Dorsolateral prefrontal cortex (tissue), 120 donors: ENCODE measurements at regions of chr2 and their contacts with region 1.

Region 1: DNA sequence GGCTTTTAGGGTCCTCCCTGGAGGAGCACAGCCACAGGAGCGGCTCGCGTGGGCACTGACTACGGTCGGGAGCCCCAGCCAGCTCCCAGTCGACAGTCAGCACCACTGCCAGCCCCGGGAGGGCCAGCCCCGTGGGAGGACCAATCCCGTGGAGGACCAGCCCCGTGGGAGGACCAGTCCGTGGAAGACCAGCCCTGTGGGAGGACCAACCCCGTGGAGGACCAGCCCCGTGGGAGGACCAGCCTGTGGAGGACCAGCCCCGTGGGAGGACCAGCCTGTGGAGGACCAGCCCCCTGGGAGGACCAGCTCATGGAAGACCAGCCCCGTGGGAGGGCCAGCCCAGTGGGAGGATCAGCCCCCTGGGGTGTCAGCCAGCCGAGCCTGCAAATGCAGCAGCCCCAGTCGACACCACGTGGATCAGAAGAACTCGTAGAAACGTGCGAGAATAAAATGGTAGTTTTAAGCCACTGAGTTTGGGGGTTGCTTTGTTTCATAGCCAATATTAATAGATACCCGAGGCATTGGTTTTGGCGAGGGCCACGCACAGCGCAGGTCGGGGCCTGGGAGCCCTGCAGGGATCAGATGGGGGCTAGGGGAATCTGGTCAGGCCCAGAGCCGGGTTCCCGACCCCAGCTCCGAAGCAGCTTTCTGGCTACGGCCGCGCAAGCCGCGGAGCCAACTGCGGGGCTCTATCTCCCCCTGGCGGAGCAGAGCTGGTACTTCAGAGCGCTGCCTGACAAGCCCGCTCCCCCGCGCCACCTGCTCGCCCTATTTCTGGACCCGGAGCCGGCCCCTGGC is 73.0 kb downstream of the TEX51 start:
- DNase-seq: peak; percentile 67 to 86 (median 78)
- H3K4me3 ChIP-seq: peak overlapping the region; percentile 32 to 72 (median 59)
- H3K27ac ChIP-seq: peak overlapping the region in 46 of 59 donors; percentile 5 to 85 (median 64)
- H3K27me3 ChIP-seq: no peaks in the 10 kb centered on the region
- CTCF ChIP-seq: peak; percentile 81 to 99 (median 96)

Region 2: GRCh38 chr2:126776692-126777619 is 194.7 kb before region 1 on chr2:
- intact Hi-C with region 1: loop called (anchors 5 to 10 kb)
- DNase-seq: peak; percentile 64 to 91 (median 82)
- H3K4me3 ChIP-seq: peak overlapping the region; percentile 49 to 84 (median 68)
- H3K27ac ChIP-seq: peak overlapping the region in 40 of 59 donors; percentile 3 to 81 (median 44)
- H3K27me3 ChIP-seq: peaks cover 0 to 4% (median 0%) of the 10 kb centered on the region in 45 donors
- CTCF ChIP-seq: peak; percentile 50 to 96 (median 90)

Region 3: GRCh38 chr2:126886211-126886915 is 85.3 kb before region 1 on chr2:
- intact Hi-C with region 1: loop called in 1 of 2 experiments (anchors 5 kb)
- DNase-seq: peak; percentile 26 to 77 (median 58)
- H3K4me3 ChIP-seq: peak overlapping the region in 58 of 59 donors; percentile 24 to 67 (median 50)
- H3K27ac ChIP-seq: no peak overlapping the region
- H3K27me3 ChIP-seq: peaks cover 0 to 6% (median 0%) of the 10 kb centered on the region in 45 donors
- CTCF ChIP-seq: peak in 55 of 56 donors; percentile 22 to 82 (median 66)

Region 4: GRCh38 chr2:126986631-126987187 is 15.0 kb after region 1 on chr2:
- intact Hi-C with region 1: no loop called
- DNase-seq: peak in 2 of 10 donors; percentile 45 to 55
- H3K4me3 ChIP-seq: no peak overlapping the region
- H3K27ac ChIP-seq: peak overlapping the region in 10 of 59 donors; percentile 6 to 62 (median 30)
- H3K27me3 ChIP-seq: no peaks in the 10 kb centered on the region
- CTCF ChIP-seq: no peak

Region 5: DNA sequence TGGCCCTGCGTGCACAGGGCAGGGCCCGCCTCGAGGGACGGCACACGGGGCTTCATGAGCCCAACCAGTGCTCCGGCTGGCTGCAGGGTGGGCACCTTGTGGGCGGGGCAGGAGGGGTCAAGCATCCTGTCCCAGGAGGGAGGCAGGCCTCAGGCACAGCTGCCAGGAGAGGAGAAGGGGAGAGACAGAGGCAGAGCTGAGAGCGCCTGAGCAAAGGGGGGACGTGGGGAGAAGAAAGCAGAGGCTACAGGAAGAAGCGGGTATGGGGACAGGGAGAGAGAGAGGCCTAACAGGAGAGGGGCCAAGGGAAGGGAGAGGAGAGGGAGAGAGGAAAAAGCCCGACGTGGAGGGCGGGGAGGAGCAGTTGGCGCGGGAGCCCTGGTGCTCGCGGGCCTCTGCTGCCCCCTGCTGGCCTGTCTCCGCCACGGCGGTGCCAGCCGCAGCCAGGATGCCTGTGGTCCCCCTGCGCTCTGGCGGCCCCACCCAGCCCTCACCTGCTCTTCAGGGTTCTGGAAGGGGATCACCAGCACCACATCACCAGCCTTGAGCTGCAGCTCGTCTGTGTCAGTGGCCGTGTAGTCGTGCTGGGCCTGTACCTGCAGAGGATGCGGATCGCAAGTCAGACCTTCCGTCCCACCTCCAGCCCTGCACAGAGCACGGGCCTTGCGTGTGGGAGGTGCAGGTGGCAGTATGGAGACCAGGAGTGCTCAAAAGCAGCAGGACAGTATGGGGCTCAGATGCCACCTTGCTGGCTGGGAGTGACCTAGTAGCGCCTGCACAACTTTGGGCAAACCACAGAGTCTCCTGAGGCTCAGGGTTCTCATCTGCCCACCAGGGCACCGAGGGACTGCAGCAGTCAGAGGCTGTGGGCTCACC is 78.5 kb after region 1 on chr2:
- intact Hi-C with region 1: loop called in 1 of 2 experiments (anchors 5 kb)
- DNase-seq: peak; percentile 63 to 85 (median 75)
- H3K4me3 ChIP-seq: no peak overlapping the region
- H3K27ac ChIP-seq: peak overlapping the region in 58 of 59 donors; percentile 18 to 98 (median 86)
- H3K27me3 ChIP-seq: no peaks in the 10 kb centered on the region
- CTCF ChIP-seq: peak; percentile 76 to 99 (median 96)

Region 6: GRCh38 chr2:127261804-127262406 is 290.2 kb after region 1 on chr2:
- intact Hi-C with region 1: no loop called
- DNase-seq: no peak
- H3K4me3 ChIP-seq: no peak overlapping the region
- H3K27ac ChIP-seq: no peak overlapping the region
- H3K27me3 ChIP-seq: no peaks in the 10 kb centered on the region
- CTCF ChIP-seq: no peak